ENCODE measurements at regions of chr12 and their contacts with region 1.

Region 1: DNA sequence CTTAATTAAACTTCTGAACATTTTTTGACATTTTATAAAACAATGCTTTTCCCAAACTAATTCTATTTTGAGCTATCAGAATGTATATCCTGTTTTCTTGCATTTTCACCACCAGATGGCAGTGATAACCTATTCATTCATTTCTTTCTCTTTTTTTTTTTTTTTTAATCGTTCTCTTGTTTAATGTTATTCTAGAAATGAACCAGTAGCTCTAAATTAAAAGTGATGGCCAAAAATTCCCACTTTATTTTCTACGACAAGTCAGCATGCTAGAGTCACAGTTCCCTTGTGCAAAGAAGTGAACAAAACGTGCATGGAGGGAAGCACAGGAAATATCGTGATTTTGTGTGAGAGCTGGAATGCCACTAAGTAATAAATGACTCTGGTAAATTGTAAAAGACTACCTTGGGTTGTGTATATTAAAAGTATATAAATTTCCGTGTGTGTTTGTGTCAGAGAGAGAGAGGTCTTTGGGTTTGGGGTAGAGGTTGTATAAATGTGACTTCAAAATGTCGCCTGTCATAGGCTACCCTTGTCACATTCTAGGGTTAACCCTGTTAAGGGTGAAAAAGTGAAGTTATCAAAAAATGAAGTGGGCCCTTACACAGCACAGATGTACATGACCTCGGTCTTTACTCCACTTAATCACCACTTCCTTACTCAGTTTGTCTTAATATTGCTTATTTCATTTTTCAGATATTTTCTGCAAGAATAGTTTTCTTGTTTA is 40.4 kb upstream of the LDHB start:
- DNase-seq: no peak
- ATAC-seq: no peak
- H3K4me3 Mint-ChIP-seq: no peak overlapping the region
- H3K27ac Mint-ChIP-seq: no peak overlapping the region
- H3K4me1 Mint-ChIP-seq: no peaks in the 10 kb centered on the region
- H3K27me3 Mint-ChIP-seq: peaks cover 3% of the 10 kb centered on the region

Region 2: DNA sequence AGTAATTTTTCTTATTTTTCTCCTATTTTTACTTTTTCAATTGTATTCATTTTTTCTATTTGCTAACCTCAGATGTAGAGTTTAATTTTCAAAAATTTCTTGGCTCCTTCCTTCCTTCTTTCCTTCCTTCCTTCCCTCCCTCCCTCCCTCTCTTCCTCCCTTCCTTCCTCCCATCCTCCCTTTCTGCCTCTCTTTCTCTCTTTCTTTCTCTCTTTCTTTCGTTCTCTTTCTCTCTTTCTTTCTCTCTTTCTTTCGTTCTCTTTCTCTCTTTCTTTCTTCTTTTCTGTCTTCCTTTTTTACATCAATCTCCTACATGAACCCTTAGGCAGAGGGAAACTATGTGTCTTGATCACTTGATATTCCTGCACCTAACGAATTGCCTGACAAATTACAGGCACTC is 81.0 kb before region 1 on chr12:
- CTCF ChIA-PET with region 1: no interaction called
- POLR2A ChIA-PET with region 1: no interaction called
- DNase-seq: no peak
- ATAC-seq: no peak
- H3K4me3 Mint-ChIP-seq: no peak overlapping the region
- H3K27ac Mint-ChIP-seq: no peak overlapping the region
- H3K4me1 Mint-ChIP-seq: peaks cover 39% of the 10 kb centered on the region
- H3K27me3 Mint-ChIP-seq: no peaks in the 10 kb centered on the region

Region 3: GRCh38 chr12:21659383-21659782 is 38.7 kb before region 1 on chr12:
- CTCF ChIA-PET with region 1: no interaction called
- POLR2A ChIA-PET with region 1: no interaction called
- DNase-seq: no peak
- ATAC-seq: no peak
- H3K4me3 Mint-ChIP-seq: no peak overlapping the region
- H3K27ac Mint-ChIP-seq: no peak overlapping the region
- H3K4me1 Mint-ChIP-seq: peaks cover 20% of the 10 kb centered on the region
- H3K27me3 Mint-ChIP-seq: no peaks in the 10 kb centered on the region

Region 4: DNA sequence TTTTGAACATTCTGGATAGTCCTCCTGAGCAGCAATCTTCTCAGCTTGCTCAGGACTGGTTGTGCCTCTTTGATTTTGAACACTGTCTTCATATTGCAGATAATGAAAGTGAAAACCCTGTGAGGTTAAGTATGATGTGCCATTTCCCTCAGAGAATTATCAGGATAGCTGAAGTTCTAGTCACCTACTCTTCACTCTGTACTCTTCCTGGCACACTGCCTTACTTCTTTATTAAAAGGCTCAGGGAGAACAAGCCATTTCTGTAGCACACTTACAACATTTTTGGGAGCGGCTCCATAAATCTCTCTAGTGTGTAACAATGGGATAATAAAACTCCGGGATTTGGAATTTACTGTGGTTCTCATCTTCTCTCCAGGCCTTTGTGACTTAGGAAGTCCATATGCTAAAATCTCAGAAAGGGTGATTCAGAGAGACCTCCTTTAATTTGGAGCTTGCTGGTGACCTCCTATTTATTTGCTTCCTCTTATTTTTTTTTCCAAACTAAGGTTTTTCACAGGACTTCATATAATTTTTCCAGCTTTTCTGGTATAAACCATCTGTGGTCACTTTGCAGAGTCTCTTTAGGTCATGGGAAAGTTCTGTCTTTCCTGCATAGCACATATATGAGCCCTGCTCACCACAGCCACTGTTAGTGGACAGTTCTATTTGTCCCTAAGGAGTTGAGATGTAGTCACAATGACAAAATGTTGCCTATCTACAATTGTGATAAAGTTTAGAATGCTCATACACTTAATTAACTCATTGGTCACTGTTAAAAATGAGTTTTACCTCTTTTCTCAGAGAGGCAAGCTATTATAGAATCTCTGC is 13.1 kb after region 1 on chr12:
- CTCF ChIA-PET with region 1: interaction called, 22 read pairs
- POLR2A ChIA-PET with region 1: no interaction called
- DNase-seq: no peak
- ATAC-seq: no peak
- H3K4me3 Mint-ChIP-seq: no peak overlapping the region
- H3K27ac Mint-ChIP-seq: no peak overlapping the region
- H3K4me1 Mint-ChIP-seq: no peaks in the 10 kb centered on the region
- H3K27me3 Mint-ChIP-seq: peaks cover 6% of the 10 kb centered on the region

Region 5: DNA sequence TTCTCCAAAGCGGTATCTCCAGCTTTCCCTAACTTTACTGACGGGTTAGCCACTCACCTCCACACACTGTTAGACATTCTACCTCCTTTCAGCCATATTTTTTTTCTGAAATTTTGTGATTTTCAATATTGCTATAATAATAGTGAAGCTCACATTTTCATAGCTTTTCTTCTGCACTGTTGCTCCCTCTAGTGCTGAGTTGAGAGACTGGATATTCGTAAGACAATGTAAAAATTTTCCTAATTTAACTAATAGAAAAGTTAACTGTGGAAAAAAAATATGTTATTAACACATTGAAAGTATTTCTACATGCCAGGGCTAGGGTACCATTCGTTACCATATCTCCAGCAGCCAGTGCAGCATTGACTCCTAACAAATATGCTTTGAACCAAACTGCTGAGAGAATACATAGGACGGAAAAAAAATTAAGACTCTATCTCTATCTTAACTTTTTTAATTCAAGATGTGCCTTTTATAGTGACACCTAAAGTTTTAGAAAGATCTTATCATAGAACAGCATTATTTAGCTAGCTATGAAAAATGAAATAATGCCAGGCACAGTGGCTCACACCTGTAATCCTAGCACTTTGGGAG is 291.8 kb after region 1 on chr12:
- CTCF ChIA-PET with region 1: interaction called, 13 read pairs
- POLR2A ChIA-PET with region 1: no interaction called
- DNase-seq: no peak
- ATAC-seq: no peak
- H3K4me3 Mint-ChIP-seq: no peak overlapping the region
- H3K27ac Mint-ChIP-seq: no peak overlapping the region
- H3K4me1 Mint-ChIP-seq: peaks cover 8% of the 10 kb centered on the region
- H3K27me3 Mint-ChIP-seq: peaks cover 9% of the 10 kb centered on the region

Region 6: DNA sequence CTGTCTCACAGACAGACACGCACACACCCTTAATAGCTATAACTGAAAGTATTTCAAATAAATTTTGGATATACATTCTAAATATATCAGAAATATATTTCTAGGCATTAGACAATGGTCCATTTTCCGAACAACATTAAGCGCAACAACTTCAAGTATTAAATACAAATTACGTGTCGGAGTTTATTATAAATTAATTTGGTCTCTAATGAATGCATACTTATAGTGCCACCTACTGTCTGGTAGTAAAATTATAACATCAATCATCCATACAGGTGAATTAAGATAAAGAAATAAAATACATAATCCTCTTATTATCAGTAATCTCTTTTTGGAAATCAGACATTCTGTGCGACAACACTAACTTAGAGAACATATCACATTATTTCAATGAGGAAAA is 320.8 kb after region 1 on chr12:
- CTCF ChIA-PET with region 1: interaction called, 19 read pairs
- POLR2A ChIA-PET with region 1: no interaction called
- DNase-seq: no peak
- ATAC-seq: no peak
- H3K4me3 Mint-ChIP-seq: no peak overlapping the region
- H3K27ac Mint-ChIP-seq: no peak overlapping the region
- H3K4me1 Mint-ChIP-seq: no peaks in the 10 kb centered on the region
- H3K27me3 Mint-ChIP-seq: peaks cover 2% of the 10 kb centered on the region

Measured in activated CD8-positive, alpha-beta T cell treated with anti-CD3 and anti-CD28 coated beads, Interleukin-2, amount 10 ng/mL, durations not matched to agents 7 days and 5 days (primary cell).